CD8-positive, alpha-beta T cell (primary cell): ENCODE measurements at regions of chr2 and their contacts with region 1.

Region 1: DNA sequence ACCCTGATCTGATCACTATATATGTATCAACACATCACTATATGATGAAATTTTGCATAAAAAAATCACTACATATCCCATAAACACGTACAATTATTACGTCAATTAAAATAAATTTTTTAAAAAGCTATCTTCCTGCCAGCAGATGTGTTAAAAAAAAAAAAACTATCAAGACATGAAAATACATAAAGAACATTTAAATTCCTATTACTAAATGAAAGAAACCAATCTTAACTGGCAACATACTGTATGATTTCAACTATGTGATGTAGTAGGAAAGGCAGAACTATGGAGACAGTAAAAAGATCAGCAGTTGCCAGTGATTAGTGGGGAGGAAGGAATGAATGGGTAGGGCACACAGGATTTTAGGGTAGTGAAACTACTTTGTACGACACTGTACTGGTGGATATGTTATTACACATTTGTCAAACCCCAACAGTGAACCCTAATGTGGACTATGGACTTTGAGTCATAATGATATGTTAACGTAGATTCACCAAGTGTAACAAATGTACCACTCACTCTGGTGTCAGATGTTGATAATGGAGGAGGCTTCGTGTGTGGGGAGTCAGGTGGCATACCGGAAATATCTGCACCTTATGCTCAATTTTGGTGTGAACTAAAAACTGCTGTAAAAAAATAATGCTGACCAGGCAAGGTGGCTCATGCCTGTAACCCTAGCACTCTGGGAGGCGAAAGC is 27.4 kb downstream of the USP34 start:
- DNase-seq: peak in 1 of 9 experiments; percentile 25
- ATAC-seq: no peak
- H3K4me3 ChIP-seq: no peak overlapping the region
- H3K4me3 Mint-ChIP-seq: peak overlapping the region; percentile 10
- H3K27ac ChIP-seq: no peak overlapping the region
- H3K27ac Mint-ChIP-seq: no peak overlapping the region
- H3K4me1 ChIP-seq: peaks cover 29% of the 10 kb centered on the region
- H3K4me1 Mint-ChIP-seq: peaks cover 72% of the 10 kb centered on the region
- H3K27me3 ChIP-seq: no peaks in the 10 kb centered on the region
- H3K27me3 Mint-ChIP-seq: no peaks in the 10 kb centered on the region
- CTCF ChIP-seq: no peak

Region 2: GRCh38 chr2:61420991-61421544 is 22.4 kb before region 1 on chr2:
- CTCF ChIA-PET with region 1: interaction called, 15 read pairs
- POLR2A ChIA-PET with region 1: interaction called, 3 read pairs
- intact Hi-C with region 1: loop called in 1 of 2 experiments (anchors 1 kb)
- DNase-seq: no peak
- ATAC-seq: no peak
- H3K4me3 ChIP-seq: no peak overlapping the region
- H3K4me3 Mint-ChIP-seq: peak overlapping the region; percentile 52
- H3K27ac ChIP-seq: no peak overlapping the region
- H3K27ac Mint-ChIP-seq: peak overlapping the region; percentile 71
- H3K4me1 ChIP-seq: peaks cover 57% of the 10 kb centered on the region
- H3K4me1 Mint-ChIP-seq: peaks cover 65% of the 10 kb centered on the region
- H3K27me3 ChIP-seq: no peaks in the 10 kb centered on the region
- H3K27me3 Mint-ChIP-seq: no peaks in the 10 kb centered on the region
- CTCF ChIP-seq: no peak

Region 3: GRCh38 chr2:61456070-61456745 is 12.7 kb after region 1 on chr2:
- CTCF ChIA-PET with region 1: no interaction called
- POLR2A ChIA-PET with region 1: interaction called, 4 read pairs
- intact Hi-C with region 1: loop called in 1 of 2 experiments (anchors 2 kb)
- DNase-seq: no peak
- ATAC-seq: no peak
- H3K4me3 ChIP-seq: no peak overlapping the region
- H3K4me3 Mint-ChIP-seq: no peak overlapping the region
- H3K27ac ChIP-seq: no peak overlapping the region
- H3K27ac Mint-ChIP-seq: peak overlapping the region; percentile 46
- H3K4me1 ChIP-seq: peaks cover 38% of the 10 kb centered on the region
- H3K4me1 Mint-ChIP-seq: peaks cover 72% of the 10 kb centered on the region
- H3K27me3 ChIP-seq: no peaks in the 10 kb centered on the region
- H3K27me3 Mint-ChIP-seq: no peaks in the 10 kb centered on the region
- CTCF ChIP-seq: no peak